Endothelial cell of umbilical vein (primary cell): ENCODE measurements at regions of chr10 and their contacts with region 1.

Region 1: DNA sequence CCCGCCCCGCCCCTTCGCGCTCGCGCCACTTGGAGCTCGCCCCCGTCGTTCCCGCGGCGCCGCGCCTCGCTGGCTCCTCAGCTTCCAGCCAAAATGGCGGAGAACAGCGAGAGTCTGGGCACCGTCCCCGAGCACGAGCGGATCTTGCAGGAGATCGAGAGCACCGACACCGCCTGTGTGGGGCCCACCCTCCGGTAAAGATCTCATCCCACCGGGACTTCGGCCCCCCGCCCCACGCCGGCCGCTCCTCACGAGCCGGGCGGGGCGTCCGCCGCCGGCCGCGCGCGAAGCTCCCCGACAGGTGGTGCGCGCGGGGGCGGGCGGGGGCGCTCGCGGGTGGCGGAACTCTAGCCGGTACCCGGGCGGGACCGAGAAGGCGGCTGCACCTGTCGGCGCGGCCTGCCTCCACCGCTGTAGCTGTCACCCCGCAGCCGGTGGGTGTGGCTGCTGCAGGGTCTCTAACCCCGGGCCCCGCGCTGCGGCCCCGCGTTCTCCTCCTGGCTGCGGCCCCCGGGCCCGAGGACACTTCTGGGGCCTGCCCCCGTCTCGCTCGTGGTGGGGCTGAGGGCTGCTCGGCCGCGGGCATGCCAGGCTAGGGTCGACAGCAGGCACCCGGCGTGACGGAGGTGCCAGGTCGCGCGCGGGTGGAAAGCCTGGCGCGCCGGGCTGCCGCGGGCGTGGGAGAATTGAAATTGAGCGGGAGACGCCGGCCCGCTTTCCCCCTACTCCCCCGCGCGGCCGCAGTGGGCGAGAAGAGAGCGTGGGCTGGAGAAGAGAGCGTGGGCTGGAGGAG is at the start of gene EXOC6:
- DNase-seq: peak; percentile 86
- H3K4me3 ChIP-seq: peak within 1 kb of the TSS; percentile 77 to 85 (median 83)
- H3K27ac ChIP-seq: no peak within 1 kb of the TSS
- H3K4me1 ChIP-seq: peaks cover 28% of the 10 kb centered on the region
- H3K27me3 ChIP-seq: no peaks in the 10 kb centered on the region
- CTCF ChIP-seq: no peak
- POLR2A ChIP-seq: peak; percentile 77
- total RNA-seq, gene EXOC6: 103 and 108 TPM in 2 replicates

Region 2: DNA sequence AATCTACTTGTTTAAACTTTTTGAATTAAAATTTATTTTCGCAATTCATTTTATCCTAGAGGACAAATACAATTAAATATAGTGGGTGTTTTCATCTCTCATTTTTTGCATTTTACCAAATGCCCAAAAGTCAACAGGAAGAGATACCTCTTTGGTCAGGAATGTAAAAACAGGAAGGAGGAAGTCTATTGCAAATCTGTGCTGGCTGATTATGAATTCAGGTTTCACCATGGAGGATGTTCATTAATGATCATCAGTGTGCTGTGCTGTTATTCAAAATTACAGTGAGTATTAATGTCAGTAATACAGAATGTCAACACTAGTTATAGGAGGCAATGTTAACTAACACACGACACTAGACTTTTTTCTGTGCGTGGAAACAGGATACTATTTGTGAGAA is 24.4 kb after region 1 on chr10:
- CTCF ChIA-PET with region 1: interaction called, 18 read pairs
- POLR2A ChIA-PET with region 1: no interaction called
- dilution Hi-C with region 1: no loop called
- intact Hi-C with region 1: loop called (anchors 1 kb)
- DNase-seq: peak; percentile 92
- H3K4me3 ChIP-seq: peak overlapping the region in 1 of 3 experiments; percentile 40
- H3K27ac ChIP-seq: peak overlapping the region; percentile 72
- H3K4me1 ChIP-seq: peaks cover 68% of the 10 kb centered on the region
- H3K27me3 ChIP-seq: no peaks in the 10 kb centered on the region
- CTCF ChIP-seq: no peak
- POLR2A ChIP-seq: peak; percentile 62

Region 3: GRCh38 chr10:92880233-92880861 is 31.7 kb after region 1 on chr10:
- CTCF ChIA-PET with region 1: interaction called, 32 read pairs
- POLR2A ChIA-PET with region 1: no interaction called
- dilution Hi-C with region 1: no loop called
- intact Hi-C with region 1: loop called (anchors 1 kb)
- DNase-seq: peak; percentile 74
- H3K4me3 ChIP-seq: no peak overlapping the region
- H3K27ac ChIP-seq: no peak overlapping the region
- H3K4me1 ChIP-seq: peaks cover 28% of the 10 kb centered on the region
- H3K27me3 ChIP-seq: no peaks in the 10 kb centered on the region
- CTCF ChIP-seq: peak; percentile 7 to 18
- POLR2A ChIP-seq: no peak

Region 4: DNA sequence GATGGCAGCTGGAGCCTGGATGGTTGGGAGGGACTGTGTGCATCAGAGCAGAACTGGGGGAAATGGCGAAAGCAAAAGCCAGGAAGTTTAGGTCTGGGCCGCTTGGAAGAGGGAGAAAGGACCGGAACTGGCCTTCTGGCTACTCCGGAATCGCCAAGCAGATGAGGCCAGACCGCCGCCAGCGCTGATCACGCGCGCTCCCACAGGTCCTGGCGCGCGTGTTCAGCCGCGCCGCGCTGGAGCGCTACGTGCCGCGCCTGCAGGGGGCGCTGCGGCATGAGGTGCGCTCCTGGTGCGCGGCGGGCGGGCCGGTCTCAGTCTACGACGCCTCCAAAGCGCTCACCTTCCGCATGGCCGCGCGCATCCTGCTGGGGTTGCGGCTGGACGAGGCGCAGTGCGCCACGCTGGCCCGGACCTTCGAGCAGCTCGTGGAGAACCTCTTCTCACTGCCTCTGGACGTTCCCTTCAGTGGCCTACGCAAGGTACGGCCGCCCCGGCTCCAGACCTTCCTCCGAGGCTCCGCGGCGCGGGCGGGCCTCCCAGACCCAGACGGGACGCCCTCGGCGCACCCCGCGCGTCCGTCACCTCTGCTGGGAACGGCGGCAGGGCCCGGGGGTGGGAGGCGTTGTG is 214.0 kb after region 1 on chr10:
- CTCF ChIA-PET with region 1: no interaction called
- POLR2A ChIA-PET with region 1: no interaction called
- dilution Hi-C with region 1: no loop called
- intact Hi-C with region 1: loop called (anchors 10 kb)
- DNase-seq: no peak
- H3K4me3 ChIP-seq: no peak overlapping the region
- H3K27ac ChIP-seq: no peak overlapping the region
- H3K4me1 ChIP-seq: peaks cover 4% of the 10 kb centered on the region
- H3K27me3 ChIP-seq: no peaks in the 10 kb centered on the region
- CTCF ChIP-seq: peak; percentile 56 to 67
- POLR2A ChIP-seq: no peak